ENCODE measurements at regions of chr7 and their contacts with region 1.

Region 1: DNA sequence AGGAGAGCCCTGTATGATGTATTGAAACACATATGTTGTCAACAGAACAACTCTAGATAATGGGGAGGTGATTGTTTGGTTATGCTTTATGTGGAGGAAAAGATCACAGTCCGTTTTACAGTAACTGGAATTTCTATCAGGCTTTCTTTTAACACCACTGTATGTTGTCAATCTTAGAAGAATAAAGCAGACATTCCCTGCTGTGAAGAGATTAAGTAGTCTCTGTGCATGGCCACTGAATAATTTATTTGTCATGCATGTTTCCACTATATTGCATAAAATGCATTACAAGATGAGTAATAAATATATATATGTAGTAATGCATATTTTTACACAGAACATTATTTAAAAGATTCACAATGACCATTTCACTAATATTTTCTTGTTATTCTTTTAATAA is 440.0 kb downstream of the ANKRD7 start:
- DNase-seq: no peak
- H3K4me3 ChIP-seq: no peak overlapping the region
- H3K27ac ChIP-seq: no peak overlapping the region
- H3K4me1 ChIP-seq: no peaks in the 10 kb centered on the region
- H3K27me3 ChIP-seq: no peaks in the 10 kb centered on the region
- CTCF ChIP-seq: no peak
- EP300 ChIP-seq: no peak
- POLR2A ChIP-seq: no peak

Region 2: DNA sequence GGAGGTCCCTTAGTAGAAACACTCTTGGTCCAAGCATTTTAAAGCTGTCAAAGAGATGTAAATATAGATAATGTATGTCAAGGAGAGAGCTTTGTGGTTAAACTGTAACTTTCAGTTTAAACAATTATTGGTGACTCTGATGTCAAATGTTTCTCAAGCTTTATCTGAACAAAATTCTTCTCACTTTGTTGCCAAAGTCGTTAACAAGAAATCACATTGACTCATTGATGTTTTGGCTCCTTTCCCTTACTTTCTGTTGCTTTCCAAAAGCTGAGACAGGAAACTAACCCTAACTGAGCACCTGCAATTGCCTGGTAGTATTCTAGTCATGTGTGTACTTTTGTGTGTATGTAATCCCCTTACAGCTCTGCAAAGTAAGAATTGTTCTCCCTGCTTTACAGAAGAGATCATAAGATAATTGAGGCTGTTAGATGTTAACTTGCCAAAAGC is 1076.1 kb before region 1 on chr7:
- intact Hi-C with region 1: loop called in 1 of 4 experiments (anchors 5 kb)
- DNase-seq: no peak
- H3K4me3 ChIP-seq: no peak overlapping the region
- H3K27ac ChIP-seq: no peak overlapping the region
- H3K4me1 ChIP-seq: no peaks in the 10 kb centered on the region
- H3K27me3 ChIP-seq: no peaks in the 10 kb centered on the region
- CTCF ChIP-seq: no peak
- EP300 ChIP-seq: no peak
- POLR2A ChIP-seq: no peak

Region 3: DNA sequence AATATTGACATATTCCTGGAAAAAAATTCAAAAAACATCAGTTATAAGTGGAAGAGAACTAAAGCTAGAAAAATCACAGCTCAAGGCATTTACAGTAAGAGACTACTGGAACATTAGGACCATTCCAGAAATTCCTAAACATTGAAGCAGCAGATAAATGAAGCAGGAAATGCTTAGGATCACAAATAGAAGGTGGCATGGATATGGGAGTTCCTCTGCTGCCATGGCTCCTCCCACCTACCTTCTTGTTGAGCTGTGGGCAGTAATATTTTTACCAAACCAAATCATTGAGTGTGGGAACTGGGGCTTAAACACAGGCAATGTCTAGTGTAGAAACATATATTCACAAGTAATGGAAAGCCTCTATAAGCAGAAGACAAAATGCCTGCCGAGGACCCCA is 147.2 kb before region 1 on chr7:
- intact Hi-C with region 1: no loop called
- DNase-seq: no peak
- H3K4me3 ChIP-seq: no peak overlapping the region
- H3K27ac ChIP-seq: no peak overlapping the region
- H3K4me1 ChIP-seq: no peaks in the 10 kb centered on the region
- H3K27me3 ChIP-seq: no peaks in the 10 kb centered on the region
- CTCF ChIP-seq: no peak
- EP300 ChIP-seq: no peak
- POLR2A ChIP-seq: no peak